Pancreas (tissue), 10 donors: ENCODE measurements at regions of chr17 and their contacts with region 1.

Region 1: DNA sequence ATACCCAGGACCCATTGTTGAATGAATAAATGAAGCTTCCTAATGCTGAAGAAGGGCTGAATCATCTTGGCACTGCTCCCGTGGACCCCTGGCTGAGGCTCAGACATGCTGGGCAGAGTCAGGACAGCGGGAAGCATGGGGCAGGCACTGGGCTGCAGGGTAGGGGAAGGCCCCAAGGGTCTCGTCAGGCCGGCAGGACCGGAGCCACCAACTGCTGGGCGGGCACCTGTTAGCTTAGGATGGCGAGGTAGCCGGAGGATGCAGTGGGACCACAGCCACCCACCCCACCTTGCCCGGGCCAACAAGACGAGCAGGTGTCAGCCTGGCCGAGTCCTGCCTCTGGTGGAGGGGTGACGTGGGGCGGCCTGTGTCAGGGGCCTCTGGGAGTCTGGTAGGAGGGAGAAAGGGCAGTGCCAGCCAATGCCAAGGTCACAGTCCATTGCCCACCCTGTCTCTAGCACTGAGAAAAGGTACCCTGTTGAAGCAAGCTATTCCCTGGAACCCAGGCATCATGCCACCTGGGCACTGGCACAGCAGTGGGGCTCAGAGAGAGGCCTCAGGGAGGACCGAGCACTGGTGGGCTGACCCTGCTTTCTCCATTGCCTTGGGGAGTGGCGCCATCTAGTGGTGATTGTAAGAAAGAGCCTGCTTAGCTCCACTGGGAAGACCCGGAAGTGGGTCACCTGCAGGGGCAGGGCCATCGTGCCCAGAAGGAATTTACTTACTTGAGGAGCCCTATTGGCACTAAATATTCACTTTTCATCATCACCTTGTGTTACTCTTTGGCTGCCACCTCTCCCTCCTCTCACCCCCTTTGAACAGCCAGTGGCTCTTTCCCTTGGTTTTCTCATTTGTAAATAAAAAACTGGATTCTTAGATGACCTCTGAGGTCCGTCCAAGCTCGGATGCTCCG is 3.0 kb upstream of the DLX3 start:
- DNase-seq: peak; percentile 75 to 86 (median 80)
- ATAC-seq: peak; percentile 72 to 86 (median 83)
- H3K4me3 ChIP-seq: peak overlapping the region in 1 of 4 donors; percentile 14
- H3K27ac ChIP-seq: no peak overlapping the region
- H3K4me1 ChIP-seq: peaks cover 0 to 10% (median 4%) of the 10 kb centered on the region in 3 donors
- H3K27me3 ChIP-seq: peaks cover 0 to 6% (median 1%) of the 10 kb centered on the region in 4 donors
- CTCF ChIP-seq: peak; percentile 95 to 98 (median 98)

Region 2: GRCh38 chr17:49861150-49861892 is 136.7 kb before region 1 on chr17:
- intact Hi-C with region 1: loop called in 2 of 3 experiments (anchors 5 kb)
- DNase-seq: peak in 3 of 6 donors; percentile 41 to 53 (median 52)
- ATAC-seq: peak; percentile 66 to 86 (median 72)
- H3K4me3 ChIP-seq: no peak overlapping the region
- H3K27ac ChIP-seq: no peak overlapping the region
- H3K4me1 ChIP-seq: no peaks in the 10 kb centered on the region
- H3K27me3 ChIP-seq: no peaks in the 10 kb centered on the region
- CTCF ChIP-seq: peak; percentile 57 to 79 (median 73)

Region 3: DNA sequence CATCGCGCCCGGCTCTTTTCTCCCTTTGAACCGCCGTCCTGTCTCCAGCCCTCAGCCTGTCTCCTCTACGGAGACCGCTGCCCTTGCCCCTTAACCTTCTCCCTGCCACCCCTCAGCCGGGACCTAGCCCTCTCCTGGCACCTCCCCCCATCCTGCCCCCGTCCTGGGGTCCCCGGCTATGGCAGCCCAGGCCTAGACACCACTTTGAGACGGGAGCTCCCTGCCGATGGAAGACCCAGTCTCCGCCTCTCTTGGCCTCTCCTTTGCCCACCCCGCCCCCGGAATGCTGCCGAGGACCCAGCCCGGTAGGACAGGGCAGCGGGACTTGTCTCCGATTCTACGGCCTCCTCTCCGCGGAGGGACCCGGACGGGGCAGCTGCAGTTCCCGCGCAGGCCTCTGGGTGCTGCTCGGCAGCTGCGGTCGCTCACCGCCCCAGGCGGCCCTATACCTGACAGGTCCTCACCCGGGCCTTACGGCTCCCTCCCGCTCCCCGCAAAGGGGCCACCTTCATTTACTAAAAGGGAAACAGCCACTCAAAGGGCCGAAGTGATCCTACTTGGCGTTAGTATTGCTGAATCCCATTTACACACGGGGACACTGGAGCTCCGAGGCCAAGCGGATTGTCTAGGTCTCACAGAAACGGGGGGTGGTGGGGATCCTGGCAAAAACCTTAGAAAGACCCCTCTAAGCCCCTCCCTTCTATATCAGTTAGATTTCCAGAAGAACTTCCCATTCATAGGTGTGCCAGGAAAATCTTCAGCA is 117.6 kb before region 1 on chr17:
- intact Hi-C with region 1: loop called in 2 of 3 experiments (anchors 5 kb)
- DNase-seq: peak; percentile 53 to 93 (median 82)
- ATAC-seq: peak; percentile 96 to 99 (median 98)
- H3K4me3 ChIP-seq: no peak overlapping the region
- H3K27ac ChIP-seq: no peak overlapping the region
- H3K4me1 ChIP-seq: peaks cover 0 to 3% (median 0%) of the 10 kb centered on the region in 3 donors
- H3K27me3 ChIP-seq: peaks cover 0 to 8% (median 0%) of the 10 kb centered on the region in 4 donors
- CTCF ChIP-seq: peak; percentile 97 to 99 (median 98)

Region 4: GRCh38 chr17:49952209-49952911 is 45.7 kb before region 1 on chr17:
- intact Hi-C with region 1: loop called in 1 of 3 experiments (anchors 5 kb)
- DNase-seq: peak; percentile 67 to 93 (median 86)
- ATAC-seq: peak; percentile 89 to 100 (median 96)
- H3K4me3 ChIP-seq: no peak overlapping the region
- H3K27ac ChIP-seq: no peak overlapping the region
- H3K4me1 ChIP-seq: no peaks in the 10 kb centered on the region
- H3K27me3 ChIP-seq: no peaks in the 10 kb centered on the region
- CTCF ChIP-seq: peak; percentile 76 to 89 (median 81)

Region 5: DNA sequence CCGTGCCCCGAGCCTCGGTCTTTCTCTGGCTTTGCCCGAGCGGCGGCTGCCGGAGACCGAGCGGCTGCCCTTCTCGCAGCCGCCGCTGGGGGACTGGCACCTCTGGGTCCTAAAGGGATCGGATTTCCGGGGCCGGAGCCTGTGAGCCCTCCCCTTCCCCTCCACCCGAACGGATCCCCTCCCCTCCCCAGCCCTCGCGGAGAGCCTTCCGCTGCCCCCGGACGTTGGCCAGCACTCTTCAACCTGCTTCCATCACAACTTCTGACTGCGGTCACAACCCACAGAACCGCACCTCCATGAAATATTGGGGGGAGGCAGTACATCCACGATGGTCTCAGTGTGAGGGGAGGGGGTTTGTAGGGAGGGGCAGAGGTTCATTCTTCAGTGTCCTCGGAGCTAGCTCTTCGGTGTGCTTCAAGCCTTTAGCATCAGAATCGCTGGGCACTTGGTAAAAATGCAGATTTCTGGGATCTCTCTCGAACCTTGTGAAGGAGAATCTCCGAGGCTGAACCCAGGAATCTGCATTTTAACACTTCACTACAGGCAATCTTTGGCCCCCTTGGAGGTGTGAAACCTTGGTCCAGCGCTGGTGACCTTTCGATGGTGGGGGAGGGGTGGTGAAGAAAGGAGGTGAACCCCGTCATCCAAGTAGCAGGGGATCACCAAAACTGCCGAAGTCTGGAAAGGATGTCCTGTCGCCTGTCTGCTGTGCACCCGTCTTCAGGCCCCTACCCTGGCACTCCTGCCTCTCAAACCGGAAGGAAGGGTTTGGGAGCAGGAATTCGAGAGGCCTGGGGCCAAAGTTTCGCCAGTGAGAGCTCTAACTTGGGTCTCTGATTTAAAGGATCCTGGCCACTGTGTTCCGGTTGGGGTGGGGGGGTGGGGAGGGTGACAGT is 153.2 kb after region 1 on chr17:
- intact Hi-C with region 1: no loop called
- DNase-seq: peak; percentile 84 to 94 (median 90)
- ATAC-seq: peak; percentile 68 to 81 (median 75)
- H3K4me3 ChIP-seq: peak overlapping the region; percentile 70 to 93 (median 80)
- H3K27ac ChIP-seq: peak overlapping the region; percentile 53 to 86 (median 78)
- H3K4me1 ChIP-seq: peaks cover 9 to 16% (median 15%) of the 10 kb centered on the region in 3 donors
- H3K27me3 ChIP-seq: no peaks in the 10 kb centered on the region
- CTCF ChIP-seq: peak; percentile 41 to 72 (median 46)